Activated CD4-positive, alpha-beta memory T cell treated with anti-CD3 and anti-CD28 coated beads, Interleukin-2, amount 10 ng/mL, durations not matched to agents 7 days and 5 days (primary cell): ENCODE measurements at regions of chrX and their contacts with region 1.

Region 1: DNA sequence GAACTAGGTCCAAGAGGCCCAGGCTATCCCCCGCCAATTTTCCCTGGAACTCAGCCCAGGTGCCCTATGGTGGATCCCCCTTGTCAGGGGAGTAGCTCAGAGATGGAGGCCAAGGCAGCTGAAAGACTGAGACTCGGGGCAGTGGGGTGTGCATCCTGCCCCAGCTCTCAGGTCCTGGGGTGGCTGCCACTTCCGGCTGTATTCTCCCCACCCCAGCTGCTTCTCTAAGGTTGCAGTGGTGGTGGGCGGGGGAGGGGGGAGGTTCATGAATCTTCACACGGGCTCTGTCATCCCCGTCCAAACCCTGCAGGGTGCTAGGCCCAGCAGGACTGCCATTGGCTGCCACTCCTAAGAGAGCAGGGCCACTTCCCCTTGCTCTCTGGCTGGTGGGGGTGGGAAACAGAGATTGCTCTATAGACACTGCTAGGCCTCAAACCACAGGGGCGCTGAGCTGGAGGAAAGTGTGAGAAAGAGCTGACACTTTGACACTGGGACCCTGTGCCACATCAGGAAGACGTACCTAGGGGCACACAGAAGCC is 1.5 kb downstream of the SASH3 start:
- DNase-seq: peak; percentile 89
- H3K4me3 Mint-ChIP-seq: peak overlapping the region; percentile 81
- H3K27ac Mint-ChIP-seq: peak overlapping the region; percentile 92
- H3K4me1 Mint-ChIP-seq: peaks cover 62% of the 10 kb centered on the region
- H3K27me3 Mint-ChIP-seq: no peaks in the 10 kb centered on the region

Region 2: DNA sequence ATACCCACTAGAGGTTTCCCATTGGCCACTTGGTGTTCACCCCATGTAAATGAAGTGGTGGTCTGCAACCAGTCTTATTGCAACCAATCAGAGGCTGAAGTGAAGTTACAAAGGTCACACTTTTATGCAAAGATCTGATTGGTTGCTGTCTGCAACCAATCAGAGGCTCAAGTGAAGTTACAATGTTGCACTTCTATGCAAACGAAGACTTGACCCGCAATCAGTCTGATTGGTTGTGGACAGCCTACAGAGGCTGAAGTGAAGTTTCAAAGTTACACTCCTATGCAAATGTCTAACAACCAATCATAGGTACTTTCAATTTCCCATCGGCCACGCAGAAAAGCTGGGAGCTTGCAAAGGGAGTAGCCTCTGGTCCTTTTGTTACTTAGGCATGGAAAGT is 64.7 kb before region 1 on chrX:
- CTCF ChIA-PET with region 1: no interaction called
- POLR2A ChIA-PET with region 1: no interaction called
- DNase-seq: no peak
- H3K4me3 Mint-ChIP-seq: no peak overlapping the region
- H3K27ac Mint-ChIP-seq: no peak overlapping the region
- H3K4me1 Mint-ChIP-seq: peaks cover 3% of the 10 kb centered on the region
- H3K27me3 Mint-ChIP-seq: peaks cover under 1% of the 10 kb centered on the region

Region 3: DNA sequence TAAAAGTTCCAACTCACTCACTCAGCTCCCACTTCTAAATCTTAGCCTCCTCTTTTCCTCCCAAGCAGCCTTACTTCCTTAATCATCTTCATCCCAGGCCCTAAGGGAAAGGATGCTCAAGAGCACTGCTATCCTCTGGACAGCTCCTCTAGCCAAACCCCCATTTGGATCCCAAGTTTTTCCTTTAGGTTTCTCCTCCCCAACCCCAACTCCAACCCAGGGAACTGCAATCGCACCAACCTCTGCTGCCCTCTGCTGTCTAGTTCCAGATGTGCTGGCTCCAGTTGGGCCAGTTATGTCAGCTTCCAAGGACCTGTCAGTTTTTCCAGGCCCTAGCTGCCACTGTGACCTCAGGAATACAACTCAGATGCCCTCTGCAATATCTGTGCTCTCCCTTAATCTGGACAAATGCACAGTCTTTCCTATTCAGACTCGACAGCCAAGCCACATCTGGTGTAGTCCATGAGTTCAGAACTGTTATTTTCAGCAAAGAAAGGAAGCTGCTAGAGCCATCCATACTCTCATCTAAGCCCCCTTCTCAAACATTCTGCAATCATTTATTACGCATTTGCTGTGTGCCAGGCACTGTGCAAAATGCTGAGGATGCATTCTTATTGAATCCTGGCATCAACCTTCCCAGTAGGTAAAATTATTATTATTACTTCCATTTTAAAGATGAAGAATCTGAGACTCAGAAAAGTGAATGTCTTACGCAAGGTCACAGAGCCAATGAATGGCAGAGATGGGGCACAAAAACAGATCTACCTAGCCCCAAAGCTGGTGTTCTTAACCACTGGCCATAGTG is 54.7 kb before region 1 on chrX:
- CTCF ChIA-PET with region 1: interaction called, 8 read pairs
- POLR2A ChIA-PET with region 1: interaction called, 10 read pairs
- DNase-seq: peak; percentile 30
- H3K4me3 Mint-ChIP-seq: no peak overlapping the region
- H3K27ac Mint-ChIP-seq: no peak overlapping the region
- H3K4me1 Mint-ChIP-seq: peaks cover 37% of the 10 kb centered on the region
- H3K27me3 Mint-ChIP-seq: no peaks in the 10 kb centered on the region

Region 4: GRCh38 chrX:129737916-129738315 is 43.3 kb before region 1 on chrX:
- CTCF ChIA-PET with region 1: interaction called, 3 read pairs
- POLR2A ChIA-PET with region 1: interaction called, 47 read pairs
- DNase-seq: no peak
- H3K4me3 Mint-ChIP-seq: no peak overlapping the region
- H3K27ac Mint-ChIP-seq: peak overlapping the region; percentile 54
- H3K4me1 Mint-ChIP-seq: peaks cover 45% of the 10 kb centered on the region
- H3K27me3 Mint-ChIP-seq: no peaks in the 10 kb centered on the region